ENCODE measurements at regions of chr3 and their contacts with region 1.

Region 1: DNA sequence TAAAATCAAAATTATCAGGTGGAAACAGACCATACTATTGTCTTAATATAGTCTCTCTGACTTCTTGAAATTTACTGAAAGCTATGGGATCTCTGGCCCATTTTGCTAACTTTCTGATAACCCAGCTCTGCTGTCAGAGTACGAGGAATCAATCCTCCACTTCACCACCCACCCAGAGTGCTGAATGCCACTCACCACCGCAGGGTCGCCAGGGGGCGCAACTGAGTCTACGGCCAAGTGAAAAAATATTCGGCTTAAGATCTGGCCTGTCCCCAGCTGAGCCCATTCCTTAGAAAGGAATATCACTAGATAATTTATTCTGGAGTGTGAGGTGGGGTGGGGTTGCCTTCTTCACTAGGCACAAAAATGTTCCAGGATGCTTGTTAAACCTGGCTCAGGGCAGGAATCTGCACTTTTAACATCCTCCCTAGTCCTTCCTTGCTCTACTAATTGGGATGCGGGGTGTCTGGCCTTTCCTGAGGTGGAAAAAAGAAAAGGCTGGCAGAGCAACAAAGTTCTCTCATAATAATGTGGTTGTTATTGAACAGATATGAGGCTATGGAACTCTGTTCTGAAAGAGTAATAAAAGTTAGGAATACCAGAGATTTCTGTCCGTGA is 520.6 kb downstream of the MFSD1 start:
- DNase-seq: peak; percentile 27
- H3K4me3 Mint-ChIP-seq: no peak overlapping the region
- H3K27ac Mint-ChIP-seq: no peak overlapping the region
- H3K4me1 Mint-ChIP-seq: no peaks in the 10 kb centered on the region
- H3K27me3 Mint-ChIP-seq: no peaks in the 10 kb centered on the region

Region 2: GRCh38 chr3:159804726-159805410 is 482.4 kb after region 1 on chr3:
- CTCF ChIA-PET with region 1: interaction called, 3 read pairs
- POLR2A ChIA-PET with region 1: no interaction called
- intact Hi-C with region 1: loop called (anchors 2 kb)
- DNase-seq: peak; percentile 49
- H3K4me3 Mint-ChIP-seq: no peak overlapping the region
- H3K27ac Mint-ChIP-seq: no peak overlapping the region
- H3K4me1 Mint-ChIP-seq: no peaks in the 10 kb centered on the region
- H3K27me3 Mint-ChIP-seq: peaks cover 2% of the 10 kb centered on the region

Measured in activated CD4-positive, alpha-beta memory T cell treated with anti-CD3 and anti-CD28 coated beads for 36 hours (primary cell).